Vagina (tissue), 2 donors: ENCODE measurements at regions of chr18 and their contacts with region 1.

Region 1: GRCh38 chr18:30982285-30982992 is 60.1 kb downstream of the DSC3 start:
- DNase-seq: no peak
- H3K4me3 ChIP-seq: no peak overlapping the region
- H3K27ac ChIP-seq: no peak overlapping the region
- H3K4me1 ChIP-seq: no peaks in the 10 kb centered on the region
- H3K27me3 ChIP-seq: no peaks in the 10 kb centered on the region
- CTCF ChIP-seq: no peak
- POLR2A ChIP-seq: no peak

Region 2: DNA sequence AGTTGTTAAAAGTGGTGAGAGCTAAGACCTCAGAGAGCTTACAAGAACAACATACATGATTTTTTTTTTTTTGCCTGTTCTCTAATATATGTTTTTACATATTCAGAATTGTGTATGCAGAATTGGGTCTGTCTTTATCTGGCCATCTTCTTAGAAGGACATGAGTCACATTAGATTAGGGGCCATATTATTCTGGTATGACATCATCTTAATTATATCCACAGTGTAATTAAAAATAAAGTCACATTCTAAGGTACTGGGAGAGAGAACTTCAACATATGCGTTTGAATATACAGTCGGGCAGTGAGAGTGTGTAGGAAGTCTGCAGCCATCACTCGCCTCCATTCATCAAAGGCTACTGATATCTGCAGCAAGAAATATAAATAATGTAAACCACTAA is 28.2 kb before region 1 on chr18:
- intact Hi-C with region 1: loop called (anchors 1 kb)
- DNase-seq: no peak
- H3K4me3 ChIP-seq: no peak overlapping the region
- H3K27ac ChIP-seq: no peak overlapping the region
- H3K4me1 ChIP-seq: no peaks in the 10 kb centered on the region
- H3K27me3 ChIP-seq: no peaks in the 10 kb centered on the region
- CTCF ChIP-seq: no peak
- POLR2A ChIP-seq: no peak

Region 3: GRCh38 chr18:31156821-31157777 is 174.7 kb after region 1 on chr18:
- intact Hi-C with region 1: no loop called
- DNase-seq: no peak
- H3K4me3 ChIP-seq: no peak overlapping the region
- H3K27ac ChIP-seq: no peak overlapping the region
- H3K4me1 ChIP-seq: no peaks in the 10 kb centered on the region
- H3K27me3 ChIP-seq: no peaks in the 10 kb centered on the region
- CTCF ChIP-seq: no peak
- POLR2A ChIP-seq: no peak